A673 (cell line): ENCODE measurements at regions of chr18 and their contacts with region 1.

Region 1: GRCh38 chr18:55509631-55510324 is 78.2 kb downstream of the TCF4 start:
- DNase-seq: peak; percentile 61
- H3K4me3 ChIP-seq: peak overlapping the region; percentile 18
- H3K27ac ChIP-seq: peak overlapping the region; percentile 82
- H3K4me1 ChIP-seq: peaks cover 66% of the 10 kb centered on the region
- H3K27me3 ChIP-seq: no peaks in the 10 kb centered on the region
- CTCF ChIP-seq: no peak

Region 2: DNA sequence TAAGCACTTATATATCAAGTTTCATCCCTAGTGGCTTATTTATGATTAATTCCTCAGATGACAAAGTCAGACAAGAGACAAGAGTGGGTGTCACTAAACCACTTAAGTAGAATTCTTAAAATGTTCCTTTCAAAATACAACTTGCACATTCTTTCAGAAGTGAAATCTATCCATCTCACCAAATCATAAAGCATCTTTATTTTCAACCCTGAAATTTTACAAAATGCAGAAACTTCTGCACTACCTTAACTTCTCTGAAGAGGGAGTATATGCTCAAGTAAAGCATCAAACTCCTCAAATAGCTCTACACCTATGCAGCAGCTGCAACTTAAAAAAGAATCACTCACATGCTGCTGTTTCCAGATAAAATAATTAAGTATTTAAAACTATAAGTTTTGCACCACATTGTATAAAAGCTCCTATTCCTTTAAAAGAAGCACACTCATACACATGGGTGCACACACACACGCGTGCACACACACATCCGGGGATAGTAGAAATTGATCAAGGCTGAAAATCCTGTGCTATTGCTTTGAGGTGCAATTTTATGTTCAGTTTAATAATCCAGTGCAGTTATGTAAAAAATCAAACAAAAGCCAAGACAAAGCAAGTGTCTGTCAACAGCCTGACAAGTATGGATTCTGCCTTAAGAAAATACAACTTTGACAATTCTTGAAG is 166.2 kb before region 1 on chr18:
- CTCF ChIA-PET with region 1: no interaction called
- POLR2A ChIA-PET with region 1: no interaction called
- intact Hi-C with region 1: loop called (anchors 10 kb)
- DNase-seq: peak; percentile 92
- H3K4me3 ChIP-seq: no peak overlapping the region
- H3K27ac ChIP-seq: peak overlapping the region; percentile 79
- H3K4me1 ChIP-seq: peaks cover 95% of the 10 kb centered on the region
- H3K27me3 ChIP-seq: no peaks in the 10 kb centered on the region
- CTCF ChIP-seq: peak; percentile 80

Region 3: GRCh38 chr18:55422456-55423180 is 87.2 kb before region 1 on chr18:
- CTCF ChIA-PET with region 1: no interaction called
- POLR2A ChIA-PET with region 1: no interaction called
- intact Hi-C with region 1: no loop called
- DNase-seq: peak; percentile 65
- H3K4me3 ChIP-seq: peak overlapping the region; percentile 47
- H3K27ac ChIP-seq: peak overlapping the region; percentile 78
- H3K4me1 ChIP-seq: peaks cover 63% of the 10 kb centered on the region
- H3K27me3 ChIP-seq: no peaks in the 10 kb centered on the region
- CTCF ChIP-seq: no peak